Left colon (tissue), 2 donors: ENCODE measurements at regions of chr6 and their contacts with region 1.

Region 1: DNA sequence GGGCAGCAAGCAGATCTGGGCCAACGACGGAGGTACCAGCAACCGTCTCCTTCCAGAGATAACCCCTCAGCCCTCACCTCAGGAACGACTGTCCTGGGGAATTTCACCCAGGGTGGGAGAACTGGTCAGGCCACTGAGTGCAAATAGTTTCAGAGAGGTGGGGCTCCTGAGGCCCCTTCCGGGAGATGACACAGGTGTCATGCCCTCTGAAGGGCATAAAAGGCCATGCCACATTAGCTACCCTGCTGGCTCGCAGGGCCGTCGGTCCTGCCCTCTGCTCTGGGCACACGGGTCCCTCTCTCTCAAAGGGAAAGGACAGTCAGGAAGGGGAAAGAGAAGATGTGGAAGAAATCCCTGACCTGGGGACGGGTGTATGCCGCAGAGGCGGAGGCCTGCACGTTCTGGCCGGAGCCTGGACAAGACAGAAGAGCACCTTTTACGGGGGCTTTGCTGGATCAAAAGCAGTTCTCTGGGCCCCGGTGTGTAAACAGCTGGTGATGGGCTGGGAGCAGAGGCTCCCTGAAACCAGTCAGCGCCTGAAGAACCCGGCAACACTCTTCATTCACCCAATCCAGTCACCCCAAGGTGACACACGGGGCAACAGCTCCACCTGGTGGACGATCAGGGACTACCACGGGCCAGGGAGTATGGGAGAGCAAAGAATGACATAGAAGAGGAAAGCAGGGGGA is 6.4 kb upstream of the TAF8 start:
- DNase-seq: peak; percentile 84 to 87
- ATAC-seq: peak; percentile 65

Region 2: DNA sequence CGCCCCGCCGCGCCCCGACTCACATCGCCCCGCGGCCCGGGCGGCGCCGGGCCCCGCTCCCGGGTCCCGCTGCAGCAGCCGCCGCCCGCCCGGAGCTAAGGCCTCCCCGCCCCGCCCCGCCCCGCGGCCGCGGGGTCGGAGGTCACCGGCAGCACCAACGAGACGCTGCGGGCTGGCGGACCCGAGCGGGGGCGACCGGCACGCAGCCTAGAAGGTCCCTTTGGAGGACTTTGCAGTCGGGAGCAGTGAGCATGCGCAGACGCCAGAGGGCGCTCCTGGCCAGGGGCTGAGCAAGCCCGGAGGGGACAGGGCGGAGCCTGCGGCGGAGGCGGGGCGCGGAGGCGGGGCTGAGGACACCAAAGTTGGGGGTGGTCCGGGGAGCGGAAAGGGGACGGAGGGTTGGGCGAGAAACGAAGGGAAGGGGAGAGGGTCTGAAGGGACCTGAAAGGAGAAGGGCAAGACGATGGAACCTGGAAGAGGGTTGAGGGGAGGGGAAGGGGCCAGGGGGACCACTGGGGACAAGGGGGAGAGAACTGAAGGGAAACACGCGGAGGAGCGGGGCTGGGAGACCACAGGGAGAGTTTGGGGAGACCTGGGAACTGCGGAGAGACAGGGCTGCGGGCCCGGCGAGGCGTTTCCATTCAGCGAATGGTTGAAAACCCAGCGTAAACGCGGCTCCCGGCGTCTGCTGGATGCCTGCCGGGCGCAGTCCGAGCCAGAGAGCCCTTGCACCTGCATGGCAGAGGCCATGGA is 264.0 kb before region 1 on chr6 and contains the start of gene FRS3:
- intact Hi-C with region 1: loop called (anchors 5 to 10 kb)
- DNase-seq: peak; percentile 98 to 99
- ATAC-seq: peak; percentile 81
- total RNA-seq, gene FRS3: 3.3 to 4.4 TPM

Region 3: DNA sequence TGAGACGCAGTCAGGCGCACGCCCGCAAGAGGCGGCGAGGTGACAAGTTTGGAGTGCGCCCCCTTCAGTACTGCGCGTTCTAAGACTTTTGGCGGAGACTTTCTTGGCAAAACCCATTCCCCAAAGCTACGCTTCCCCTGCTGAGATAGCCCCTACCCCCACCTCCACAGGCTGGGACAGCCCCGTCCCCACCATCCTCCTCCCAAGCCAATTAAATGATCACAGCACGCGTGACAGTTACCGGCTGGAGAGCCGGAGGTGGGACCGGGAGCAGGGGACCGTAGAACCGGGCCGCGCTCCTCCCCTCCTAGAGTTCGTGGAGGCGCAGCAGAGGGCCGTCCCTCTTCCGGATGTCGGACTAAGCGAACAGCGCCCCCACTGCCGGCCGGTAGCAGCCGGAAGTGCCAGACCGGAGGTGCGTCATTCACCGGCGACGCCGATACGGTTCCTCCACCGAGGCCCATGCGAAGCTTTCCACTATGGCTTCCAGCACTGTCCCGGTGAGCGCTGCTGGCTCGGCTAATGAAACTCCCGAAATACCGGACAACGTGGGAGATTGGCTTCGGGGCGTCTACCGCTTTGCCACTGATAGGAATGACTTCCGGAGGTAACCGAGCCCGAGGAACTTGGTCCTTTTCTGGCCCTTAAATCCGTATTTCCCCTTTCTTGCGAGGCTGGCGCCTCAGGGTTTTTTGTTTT is 256.6 kb before region 1 on chr6 and contains the start of gene TOMM6:
- intact Hi-C with region 1: loop called (anchors 5 to 10 kb)
- DNase-seq: peak; percentile 95 to 97
- ATAC-seq: peak; percentile 84
- total RNA-seq, gene TOMM6: 97.1 to 98.4 TPM

Region 4: GRCh38 chr6:41936073-41936837 is 107.7 kb before region 1 on chr6:
- intact Hi-C with region 1: loop called (anchors 5 to 10 kb)
- DNase-seq: peak; percentile 56 to 68
- ATAC-seq: peak; percentile 52

Region 5: GRCh38 chr6:42068872-42069523 is 25.1 kb after region 1 on chr6:
- intact Hi-C with region 1: no loop called
- DNase-seq: no peak
- ATAC-seq: no peak

Region 6: GRCh38 chr6:42197555-42198362 is 153.8 kb after region 1 on chr6:
- intact Hi-C with region 1: no loop called
- DNase-seq: no peak
- ATAC-seq: no peak